ENCODE measurements at regions of chr9 and their contacts with region 1.

Region 1: GRCh38 chr9:3875364-3876132 is 349.7 kb upstream of the RFX3 start:
- DNase-seq: no peak
- H3K4me3 ChIP-seq: no peak overlapping the region
- H3K27ac ChIP-seq: no peak overlapping the region
- H3K27me3 ChIP-seq: no peaks in the 10 kb centered on the region
- CTCF ChIP-seq: no peak

Region 2: DNA sequence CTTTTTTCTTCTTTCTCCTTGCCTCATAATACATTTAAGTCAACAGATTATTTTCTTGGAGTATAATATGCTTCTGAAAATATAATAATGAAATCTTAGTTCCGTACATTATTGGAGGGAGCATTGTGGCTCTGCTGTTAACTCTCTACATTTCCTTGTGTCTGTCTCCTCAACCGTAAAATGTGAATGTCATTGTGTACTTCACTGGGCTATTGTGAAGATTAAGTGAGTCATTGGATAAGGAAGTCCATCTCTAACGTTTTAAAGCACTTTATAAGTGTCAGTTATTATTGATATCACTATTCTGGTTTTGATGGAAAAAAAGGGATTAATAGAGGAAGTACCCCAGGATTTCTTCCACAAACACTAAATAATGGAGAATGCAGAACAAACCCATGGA is 45.3 kb before region 1 on chr9:
- intact Hi-C with region 1: loop called in 1 of 2 experiments (anchors 5 kb)
- DNase-seq: no peak
- H3K4me3 ChIP-seq: no peak overlapping the region
- H3K27ac ChIP-seq: no peak overlapping the region
- H3K27me3 ChIP-seq: no peaks in the 10 kb centered on the region
- CTCF ChIP-seq: no peak

Region 3: DNA sequence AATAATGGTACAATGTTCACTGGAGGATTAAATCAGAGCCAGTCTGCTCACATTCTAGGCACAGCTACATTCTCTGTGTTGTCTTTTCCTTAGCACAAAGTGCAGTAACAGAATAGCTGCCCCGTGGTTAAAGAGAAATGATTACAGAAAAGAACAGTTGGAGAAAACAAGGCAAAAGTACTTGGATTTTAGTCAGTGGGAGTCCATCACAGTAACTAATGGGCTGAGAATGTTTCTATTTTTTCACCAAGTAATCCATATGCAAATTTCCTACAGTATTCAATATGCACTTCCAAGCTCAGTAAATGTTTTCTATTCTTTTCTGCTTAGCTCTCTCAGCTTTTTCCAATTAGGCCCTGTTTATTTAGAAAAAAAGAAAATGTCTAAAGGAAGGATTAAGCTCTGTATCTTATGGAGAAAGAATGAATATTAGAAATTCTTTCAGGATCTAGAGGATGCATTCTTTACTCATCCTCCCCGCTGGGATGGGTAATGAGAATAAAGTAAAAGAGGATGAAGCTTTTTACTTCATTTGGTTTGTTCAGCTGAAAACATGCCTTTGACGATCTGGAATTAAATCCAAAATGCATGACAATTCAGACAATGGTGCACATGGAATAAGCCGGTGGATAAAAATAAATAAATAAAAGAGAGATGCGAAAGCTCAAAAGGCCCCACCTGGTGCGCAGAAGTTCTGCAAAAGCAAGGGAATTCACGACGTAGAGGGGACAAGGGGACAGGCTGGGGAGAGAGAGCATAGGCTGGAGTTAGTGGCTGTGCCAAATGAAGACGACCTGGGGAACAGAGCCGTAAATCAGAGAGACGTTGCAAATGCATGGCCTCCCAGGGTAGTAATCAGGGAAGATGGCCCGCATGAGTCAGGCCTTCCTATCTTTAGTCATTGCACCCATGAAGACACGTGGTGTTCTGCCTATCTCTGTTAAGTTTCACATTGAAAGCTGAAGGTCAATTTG is 79.1 kb after region 1 on chr9:
- intact Hi-C with region 1: no loop called
- DNase-seq: no peak
- H3K4me3 ChIP-seq: no peak overlapping the region
- H3K27ac ChIP-seq: peak overlapping the region in 45 of 59 donors; percentile 7 to 77 (median 54)
- H3K27me3 ChIP-seq: peaks cover 0 to 4% (median 0%) of the 10 kb centered on the region in 45 donors
- CTCF ChIP-seq: no peak

Measured in dorsolateral prefrontal cortex (tissue), 120 donors.